ENCODE measurements at regions of chr4 and their contacts with region 1.

Region 1: GRCh38 chr4:153115322-153116290 is 88.6 kb upstream of the TRIM2 start:
- DNase-seq: peak; percentile 90
- H3K4me3 Mint-ChIP-seq: no peak overlapping the region
- H3K27ac Mint-ChIP-seq: no peak overlapping the region
- H3K4me1 Mint-ChIP-seq: peaks cover 8% of the 10 kb centered on the region
- H3K27me3 Mint-ChIP-seq: no peaks in the 10 kb centered on the region

Region 2: DNA sequence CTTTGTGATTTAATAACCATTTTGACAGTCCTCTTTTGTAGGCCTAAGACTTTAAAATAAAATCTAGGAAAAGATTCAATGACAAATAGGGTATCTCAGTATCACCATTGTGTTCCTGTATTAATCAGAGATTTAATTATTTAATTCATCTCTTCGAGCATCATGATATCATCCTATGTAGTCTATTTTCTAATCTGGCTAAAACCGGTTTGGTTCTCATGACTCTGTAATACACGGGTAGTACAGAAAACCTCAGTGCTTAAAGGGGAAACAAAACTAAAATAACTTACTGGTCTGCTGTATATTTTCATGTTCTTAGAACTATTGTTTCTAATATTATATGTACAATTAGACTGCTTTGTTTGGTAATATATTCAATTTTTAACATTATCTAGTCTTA is 556.0 kb before region 1 on chr4:
- CTCF ChIA-PET with region 1: no interaction called
- intact Hi-C with region 1: loop called (anchors 2 kb)
- DNase-seq: no peak
- H3K4me3 Mint-ChIP-seq: no peak overlapping the region
- H3K27ac Mint-ChIP-seq: no peak overlapping the region
- H3K4me1 Mint-ChIP-seq: peaks cover 15% of the 10 kb centered on the region
- H3K27me3 Mint-ChIP-seq: no peaks in the 10 kb centered on the region

Region 3: GRCh38 chr4:152779513-152780266 is 335.9 kb before region 1 on chr4 and contains the starts of genes ARFIP1 and TIGD4:
- CTCF ChIA-PET with region 1: no interaction called
- intact Hi-C with region 1: loop called (anchors 1 kb)
- DNase-seq: peak; percentile 97
- H3K4me3 Mint-ChIP-seq: peak within 1 kb of the TSS; percentile 91
- H3K27ac Mint-ChIP-seq: peak within 1 kb of the TSS; percentile 75
- H3K4me1 Mint-ChIP-seq: peaks cover 23% of the 10 kb centered on the region
- H3K27me3 Mint-ChIP-seq: peaks cover 4% of the 10 kb centered on the region
- total RNA-seq, gene ARFIP1: 5.0 to 5.1 TPM
- total RNA-seq, gene TIGD4: 0.07 to 0.27 TPM

Region 4: DNA sequence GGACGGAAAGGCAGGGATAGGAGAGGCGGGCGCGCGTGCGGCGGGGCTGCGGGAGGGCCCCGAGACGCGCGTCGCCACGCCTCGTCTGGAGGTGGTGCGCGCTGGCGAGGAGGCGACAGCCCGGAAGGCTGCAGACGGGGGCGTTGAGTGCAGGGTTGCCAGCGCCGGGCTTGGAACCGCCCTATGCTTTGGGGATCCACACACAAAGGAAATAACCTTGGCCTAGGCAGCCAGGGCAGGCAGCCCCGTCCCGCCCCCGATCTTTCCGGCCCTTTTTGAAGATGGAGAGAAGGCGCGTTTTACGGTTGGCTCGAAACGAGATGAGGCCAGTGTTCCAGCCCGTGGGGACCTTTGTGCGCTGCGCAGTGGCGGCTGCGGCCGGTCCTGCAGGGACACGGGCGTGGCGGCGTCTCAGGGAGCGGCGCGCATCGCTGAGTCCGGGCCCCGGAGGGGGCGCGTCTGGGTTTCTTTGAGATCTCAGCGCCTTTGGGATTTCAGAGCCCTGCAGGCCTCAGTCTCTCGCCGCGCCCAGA is 37.8 kb after region 1 on chr4:
- CTCF ChIA-PET with region 1: interaction called, 3 read pairs
- intact Hi-C with region 1: loop called (anchors 1 kb)
- DNase-seq: peak; percentile 91
- H3K4me3 Mint-ChIP-seq: peak overlapping the region; percentile 80
- H3K27ac Mint-ChIP-seq: peak overlapping the region; percentile 86
- H3K4me1 Mint-ChIP-seq: peaks cover 58% of the 10 kb centered on the region
- H3K27me3 Mint-ChIP-seq: no peaks in the 10 kb centered on the region

Region 5: GRCh38 chr4:153249199-153250041 is 133.8 kb after region 1 on chr4:
- CTCF ChIA-PET with region 1: no interaction called
- intact Hi-C with region 1: loop called (anchors 1 kb)
- DNase-seq: peak; percentile 91
- H3K4me3 Mint-ChIP-seq: peak overlapping the region; percentile 83
- H3K27ac Mint-ChIP-seq: peak overlapping the region; percentile 91
- H3K4me1 Mint-ChIP-seq: peaks cover 27% of the 10 kb centered on the region
- H3K27me3 Mint-ChIP-seq: no peaks in the 10 kb centered on the region

Region 6: GRCh38 chr4:153528705-153529485 is 413.3 kb after region 1 on chr4:
- CTCF ChIA-PET with region 1: no interaction called
- intact Hi-C with region 1: loop called (anchors 2 kb)
- DNase-seq: no peak
- H3K4me3 Mint-ChIP-seq: peak overlapping the region; percentile 60
- H3K27ac Mint-ChIP-seq: peak overlapping the region; percentile 97
- H3K4me1 Mint-ChIP-seq: peaks cover 91% of the 10 kb centered on the region
- H3K27me3 Mint-ChIP-seq: no peaks in the 10 kb centered on the region

Region 7: GRCh38 chr4:153706519-153706918 is 590.9 kb after region 1 on chr4:
- CTCF ChIA-PET with region 1: no interaction called
- intact Hi-C with region 1: no loop called
- DNase-seq: no peak
- H3K4me3 Mint-ChIP-seq: no peak overlapping the region
- H3K27ac Mint-ChIP-seq: no peak overlapping the region
- H3K4me1 Mint-ChIP-seq: peaks cover 11% of the 10 kb centered on the region
- H3K27me3 Mint-ChIP-seq: no peaks in the 10 kb centered on the region

Measured in activated naive CD4-positive, alpha-beta T cell treated with anti-CD3 and anti-CD28 coated beads for 36 hours (primary cell).